Endothelial cell of umbilical vein (primary cell): ENCODE measurements at regions of chr17 and their contacts with region 1.

Region 1: DNA sequence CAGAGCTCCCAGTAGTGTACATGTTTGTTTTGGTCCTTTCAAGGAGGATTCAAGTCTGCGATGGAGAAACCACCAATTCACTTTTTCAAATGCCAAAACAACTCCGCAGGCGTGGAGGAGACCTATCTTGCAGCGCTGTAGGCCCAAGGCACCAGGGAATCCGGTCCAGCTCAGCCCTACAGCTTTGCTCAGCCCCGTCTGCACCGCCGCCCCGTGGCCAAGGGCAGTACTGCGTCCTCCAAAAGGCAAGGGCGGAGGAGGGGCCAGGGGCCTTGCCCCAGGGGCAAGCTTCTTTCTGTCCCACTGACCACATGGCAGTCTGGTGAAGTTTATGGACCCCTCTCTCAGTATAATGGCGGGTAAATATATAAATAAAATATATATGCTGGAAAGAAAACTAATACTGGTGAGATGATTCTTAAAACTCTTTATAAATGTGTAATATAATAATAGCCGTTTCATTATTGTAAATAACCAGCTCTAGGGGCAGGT is 709 bp upstream of the CD300LG start:
- DNase-seq: peak; percentile 74
- H3K4me3 ChIP-seq: no peak overlapping the region
- H3K27ac ChIP-seq: no peak overlapping the region
- H3K4me1 ChIP-seq: no peaks in the 10 kb centered on the region
- H3K27me3 ChIP-seq: peaks cover 2 to 3% of the 10 kb centered on the region in 2 experiments
- CTCF ChIP-seq: peak; percentile 95 to 99
- POLR2A ChIP-seq: no peak

Region 2: GRCh38 chr17:43723697-43724359 is 122.4 kb before region 1 on chr17:
- CTCF ChIA-PET with region 1: no interaction called
- POLR2A ChIA-PET with region 1: no interaction called
- dilution Hi-C with region 1: no loop called
- intact Hi-C with region 1: no loop called
- DNase-seq: no peak
- H3K4me3 ChIP-seq: no peak overlapping the region
- H3K27ac ChIP-seq: no peak overlapping the region
- H3K4me1 ChIP-seq: peaks cover 6% of the 10 kb centered on the region
- H3K27me3 ChIP-seq: no peaks in the 10 kb centered on the region
- CTCF ChIP-seq: no peak
- POLR2A ChIP-seq: no peak

Region 3: DNA sequence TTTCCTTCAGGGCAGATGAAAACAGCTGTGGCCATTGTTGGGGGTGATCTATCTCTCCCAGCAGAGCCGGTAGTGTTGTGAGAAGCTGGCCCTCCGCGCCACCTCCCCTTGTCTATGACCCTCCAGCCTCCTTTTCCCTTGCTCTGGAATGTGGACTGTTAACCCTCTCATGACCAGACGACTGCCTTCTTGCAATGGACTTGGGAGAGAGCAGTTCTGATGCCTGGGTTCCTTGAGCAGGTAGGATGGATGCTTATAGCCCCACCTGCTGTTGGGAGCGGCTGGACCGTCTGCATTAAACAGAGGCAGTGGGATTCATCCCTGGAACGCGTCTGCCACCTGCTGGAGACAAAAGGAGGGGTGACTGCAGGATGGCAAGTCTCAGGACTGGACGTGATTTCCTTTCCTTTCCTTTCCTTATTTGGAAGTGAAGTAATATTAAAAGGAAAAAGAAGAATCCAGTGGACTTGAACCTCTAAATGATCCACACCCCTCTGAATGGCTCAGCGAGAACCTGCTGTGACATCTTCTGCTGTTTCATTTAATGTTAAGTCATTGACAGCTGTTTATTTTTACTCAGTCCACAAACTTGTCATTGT is 85.9 kb before region 1 on chr17:
- CTCF ChIA-PET with region 1: interaction called, 46 read pairs
- POLR2A ChIA-PET with region 1: no interaction called
- dilution Hi-C with region 1: no loop called
- intact Hi-C with region 1: no loop called
- DNase-seq: peak; percentile 93
- H3K4me3 ChIP-seq: no peak overlapping the region
- H3K27ac ChIP-seq: no peak overlapping the region
- H3K4me1 ChIP-seq: peaks cover 2% of the 10 kb centered on the region
- H3K27me3 ChIP-seq: peaks cover 8 to 13% of the 10 kb centered on the region in 2 experiments
- CTCF ChIP-seq: peak; percentile 97 to 100
- POLR2A ChIP-seq: no peak

Region 4: GRCh38 chr17:43778337-43779144 is 67.7 kb before region 1 on chr17 and contains the start of gene DUSP3:
- CTCF ChIA-PET with region 1: interaction called, 27 read pairs
- POLR2A ChIA-PET with region 1: no interaction called
- dilution Hi-C with region 1: no loop called
- intact Hi-C with region 1: loop called (anchors 1 kb)
- DNase-seq: peak; percentile 89
- H3K4me3 ChIP-seq: peak within 1 kb of the TSS; percentile 47 to 98 (median 63)
- H3K27ac ChIP-seq: peak within 1 kb of the TSS; percentile 91
- H3K4me1 ChIP-seq: peaks cover 14% of the 10 kb centered on the region
- H3K27me3 ChIP-seq: peaks cover 0 to 3% of the 10 kb centered on the region in 2 experiments
- CTCF ChIP-seq: no peak
- POLR2A ChIP-seq: peak; percentile 88
- total RNA-seq, gene DUSP3: 51.4 and 57.7 TPM in 2 replicates

Region 5: DNA sequence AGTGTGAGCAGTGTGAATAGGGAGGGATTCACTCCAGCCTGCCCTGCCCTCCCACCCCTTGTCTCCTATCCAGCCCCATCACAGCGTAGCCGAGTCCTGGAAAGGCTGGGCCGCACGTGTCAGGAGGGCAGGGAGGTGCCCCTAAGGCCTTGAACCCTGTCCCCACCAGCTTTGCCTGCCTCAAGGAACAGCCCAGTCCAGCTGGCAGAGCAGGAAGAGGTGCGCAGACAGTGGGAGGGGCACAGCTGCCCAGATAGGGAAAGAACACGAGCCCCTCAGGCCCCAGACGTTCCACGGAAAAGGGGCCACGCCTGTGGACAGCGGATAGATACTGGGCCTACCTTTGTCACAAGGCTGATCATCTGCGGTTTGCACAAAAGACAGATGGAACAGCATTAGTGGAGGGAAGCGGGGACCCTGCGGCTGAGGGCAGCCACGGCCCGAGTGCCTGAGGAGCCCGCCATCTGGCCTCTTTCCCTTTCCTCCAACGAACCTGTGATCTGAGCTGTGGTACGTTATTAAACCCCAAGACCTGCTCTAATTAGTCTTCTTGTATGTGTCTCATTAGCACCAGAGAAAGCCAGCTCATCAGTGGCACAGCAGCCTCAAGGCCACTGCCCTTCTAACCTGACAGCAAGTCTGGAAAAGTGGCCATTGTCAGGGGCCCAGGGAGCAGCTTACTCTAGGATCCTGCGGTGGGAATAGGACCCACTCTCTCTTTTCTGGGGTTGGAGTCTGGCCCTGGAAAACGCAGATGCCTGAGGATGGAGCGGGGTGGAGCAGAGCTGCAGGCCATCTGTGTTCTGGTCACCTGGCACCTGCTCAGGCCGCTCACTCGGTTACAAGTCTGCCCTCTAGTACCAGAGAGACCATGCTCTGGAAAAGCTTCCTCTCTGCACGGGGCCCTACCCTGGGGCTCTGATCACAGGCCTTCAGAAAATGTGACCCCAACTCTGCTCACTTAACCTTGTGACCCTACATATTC is 29.6 kb before region 1 on chr17:
- CTCF ChIA-PET with region 1: interaction called, 21 read pairs
- POLR2A ChIA-PET with region 1: interaction called, 4 read pairs
- dilution Hi-C with region 1: no loop called
- intact Hi-C with region 1: no loop called
- DNase-seq: no peak
- H3K4me3 ChIP-seq: no peak overlapping the region
- H3K27ac ChIP-seq: no peak overlapping the region
- H3K4me1 ChIP-seq: peaks cover 14% of the 10 kb centered on the region
- H3K27me3 ChIP-seq: no peaks in the 10 kb centered on the region
- CTCF ChIP-seq: no peak
- POLR2A ChIP-seq: no peak

Region 6: GRCh38 chr17:43861024-43861621 is 14.9 kb after region 1 on chr17:
- CTCF ChIA-PET with region 1: interaction called, 39 read pairs
- POLR2A ChIA-PET with region 1: no interaction called
- dilution Hi-C with region 1: no loop called
- intact Hi-C with region 1: no loop called
- DNase-seq: no peak
- H3K4me3 ChIP-seq: no peak overlapping the region
- H3K27ac ChIP-seq: no peak overlapping the region
- H3K4me1 ChIP-seq: no peaks in the 10 kb centered on the region
- H3K27me3 ChIP-seq: peaks cover 8 to 13% of the 10 kb centered on the region in 2 experiments
- CTCF ChIP-seq: no peak
- POLR2A ChIP-seq: no peak